ENCODE measurements at regions of chr10 and their contacts with region 1.

Region 1: GRCh38 chr10:132637477-132638129 is 100.0 kb downstream of the INPP5A start:
- DNase-seq: peak; percentile 59
- ATAC-seq: peak; percentile 88
- H3K4me3 ChIP-seq: no peak overlapping the region
- H3K27ac ChIP-seq: no peak overlapping the region
- H3K4me1 ChIP-seq: no peaks in the 10 kb centered on the region
- H3K27me3 ChIP-seq: no peaks in the 10 kb centered on the region; a peak in 1 of 5 replicates
- CTCF ChIP-seq: peak; percentile 80
- EP300 ChIP-seq: no peak
- POLR2A ChIP-seq: no peak
- RAD21 ChIP-seq: peak; percentile 74

Region 2: GRCh38 chr10:132387764-132388210 is 249.8 kb before region 1 on chr10:
- CTCF ChIA-PET with region 1: no interaction called
- POLR2A ChIA-PET with region 1: no interaction called
- in situ Hi-C with region 1: loop called (anchors 10 kb)
- intact Hi-C with region 1: no loop called
- DNase-seq: peak; percentile 29
- ATAC-seq: peak; percentile 22
- H3K4me3 ChIP-seq: peak overlapping the region in 1 of 3 experiments; percentile 48; a peak in 1 of 6 replicates
- H3K27ac ChIP-seq: no peak overlapping the region
- H3K4me1 ChIP-seq: peaks cover 61% of the 10 kb centered on the region
- H3K27me3 ChIP-seq: peaks cover 3 to 33% of the 10 kb centered on the region in 2 experiments; a peak in 2 of 5 replicates
- CTCF ChIP-seq: peak; percentile 89
- EP300 ChIP-seq: no peak
- POLR2A ChIP-seq: no peak
- RAD21 ChIP-seq: peak; percentile 69

Region 3: DNA sequence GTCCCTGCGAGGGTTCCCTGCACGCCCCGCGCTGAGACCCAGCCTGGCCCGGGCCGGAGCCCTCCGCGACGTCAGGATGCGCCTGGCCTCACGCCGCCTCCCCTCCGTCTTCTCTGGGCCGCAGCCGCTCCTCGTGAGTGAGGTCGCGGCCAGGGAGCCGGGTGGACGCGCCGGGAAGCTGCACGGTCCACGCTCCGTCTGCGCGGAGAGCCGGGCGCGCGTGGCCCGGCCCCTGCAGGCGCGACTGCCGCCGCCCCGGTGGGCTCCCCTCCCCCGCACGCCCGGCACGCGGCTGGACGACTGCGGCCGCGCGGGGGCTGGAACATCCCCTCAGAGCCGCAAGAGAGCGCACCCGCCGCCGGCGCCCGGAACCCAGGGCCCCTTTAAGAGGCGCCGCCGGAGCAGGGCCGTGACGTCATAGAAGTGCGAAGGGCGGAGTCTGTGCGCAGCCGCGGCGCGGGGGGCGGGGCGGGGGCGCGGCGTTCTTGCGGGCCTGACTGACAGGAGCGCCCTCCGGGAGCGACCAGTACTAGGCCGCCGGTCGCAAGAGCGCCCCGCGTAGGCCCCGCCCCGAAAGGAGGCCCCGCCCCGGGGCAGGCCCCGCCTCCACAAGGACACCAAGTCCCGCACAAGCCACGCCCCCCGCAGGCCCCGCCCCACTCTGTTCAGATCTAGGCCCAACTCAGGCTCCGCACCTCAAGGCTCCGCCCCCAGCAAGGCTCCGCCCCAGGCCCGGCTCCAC is 100.5 kb before region 1 on chr10:
- CTCF ChIA-PET with region 1: no interaction called
- POLR2A ChIA-PET with region 1: no interaction called
- in situ Hi-C with region 1: no loop called
- intact Hi-C with region 1: no loop called
- DNase-seq: peak; percentile 95
- ATAC-seq: peak; percentile 82
- H3K4me3 ChIP-seq: peak overlapping the region; percentile 79 to 85 (median 83); a peak in 5 of 6 replicates
- H3K27ac ChIP-seq: peak overlapping the region; percentile 67
- H3K4me1 ChIP-seq: peaks cover 49% of the 10 kb centered on the region
- H3K27me3 ChIP-seq: no peaks in the 10 kb centered on the region
- CTCF ChIP-seq: peak; percentile 50
- EP300 ChIP-seq: no peak
- POLR2A ChIP-seq: peak in 1 of 2 experiments; percentile 67; a peak in 2 of 4 replicates
- RAD21 ChIP-seq: peak; percentile 76; the same call in 1 of the 2 replicates

Region 4: DNA sequence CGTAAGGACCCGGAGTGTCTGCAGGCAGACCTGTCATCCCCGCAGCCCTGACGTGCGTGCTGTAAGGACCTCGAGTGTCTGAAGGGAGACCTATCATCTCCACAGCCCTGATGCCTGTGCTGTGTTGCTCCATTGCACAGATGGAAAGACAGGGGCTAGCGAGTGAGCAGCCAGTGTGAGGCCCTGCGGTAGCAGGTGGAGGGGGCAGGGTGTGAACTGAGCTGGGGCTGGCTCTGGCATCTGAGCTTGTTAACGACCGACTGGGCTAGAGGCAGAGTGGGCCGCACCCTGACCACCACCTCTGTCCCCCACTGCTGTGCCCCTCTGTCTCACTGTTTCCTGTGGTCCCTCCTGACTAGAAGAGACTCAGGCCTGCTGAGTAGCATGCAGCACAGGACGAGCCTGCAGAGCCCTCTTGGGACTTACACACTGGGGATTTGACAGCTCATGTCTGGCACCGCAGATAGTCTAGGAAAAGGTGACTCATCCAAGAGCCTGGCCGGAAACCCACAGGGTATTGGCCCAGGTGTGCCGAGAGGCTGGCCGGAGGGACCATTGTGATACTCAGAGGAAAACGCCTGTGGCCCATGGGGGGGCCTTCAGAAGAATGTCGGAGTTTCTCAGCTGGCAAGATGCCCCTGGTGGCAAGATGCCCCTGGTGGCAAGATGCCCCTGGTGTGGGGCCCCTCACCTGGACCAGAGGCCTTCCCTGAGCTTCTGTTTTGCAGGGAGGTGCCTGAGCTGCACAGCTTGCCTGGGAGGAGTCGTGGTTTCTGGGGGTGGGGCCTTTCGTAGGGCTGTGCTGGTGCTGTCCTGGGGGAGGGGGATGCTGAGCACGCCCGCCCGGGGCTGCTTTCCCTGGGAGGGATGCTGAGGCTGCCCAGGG is 65.7 kb before region 1 on chr10:
- CTCF ChIA-PET with region 1: no interaction called
- POLR2A ChIA-PET with region 1: no interaction called
- in situ Hi-C with region 1: no loop called
- intact Hi-C with region 1: loop called (anchors 5 kb)
- DNase-seq: peak; percentile 75
- ATAC-seq: peak; percentile 86
- H3K4me3 ChIP-seq: peak overlapping the region in 1 of 3 experiments; percentile 45; a peak in 1 of 6 replicates
- H3K27ac ChIP-seq: no peak overlapping the region
- H3K4me1 ChIP-seq: peaks cover 40% of the 10 kb centered on the region
- H3K27me3 ChIP-seq: no peaks in the 10 kb centered on the region
- CTCF ChIP-seq: no peak
- EP300 ChIP-seq: no peak
- POLR2A ChIP-seq: no peak
- RAD21 ChIP-seq: no peak

Region 5: DNA sequence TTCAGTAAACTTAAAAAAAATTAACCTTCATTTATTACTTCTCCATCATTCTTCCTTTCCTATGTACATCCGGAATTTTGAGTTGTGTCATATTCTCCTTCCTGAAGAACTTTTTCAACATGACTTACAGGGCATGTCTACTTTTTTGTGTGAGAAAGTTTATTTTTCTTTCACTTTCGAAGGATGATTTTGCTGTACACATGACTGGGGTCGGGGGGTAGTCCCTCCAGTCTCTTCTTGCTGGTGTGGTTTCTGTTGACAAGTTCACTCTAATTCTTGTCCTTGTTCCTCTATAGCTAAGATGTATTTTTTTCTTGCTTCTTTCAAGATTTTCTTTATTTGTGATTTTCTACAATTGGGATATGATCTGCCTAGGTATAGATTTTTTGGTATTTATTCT is 44.2 kb before region 1 on chr10:
- CTCF ChIA-PET with region 1: no interaction called
- POLR2A ChIA-PET with region 1: no interaction called
- in situ Hi-C with region 1: no loop called
- intact Hi-C with region 1: loop called (anchors 5 kb)
- DNase-seq: no peak
- ATAC-seq: no peak
- H3K4me3 ChIP-seq: no peak overlapping the region
- H3K27ac ChIP-seq: no peak overlapping the region
- H3K4me1 ChIP-seq: peaks cover 52% of the 10 kb centered on the region
- H3K27me3 ChIP-seq: no peaks in the 10 kb centered on the region; a peak in 1 of 5 replicates
- CTCF ChIP-seq: no peak
- EP300 ChIP-seq: no peak
- POLR2A ChIP-seq: no peak
- RAD21 ChIP-seq: no peak

Region 6: DNA sequence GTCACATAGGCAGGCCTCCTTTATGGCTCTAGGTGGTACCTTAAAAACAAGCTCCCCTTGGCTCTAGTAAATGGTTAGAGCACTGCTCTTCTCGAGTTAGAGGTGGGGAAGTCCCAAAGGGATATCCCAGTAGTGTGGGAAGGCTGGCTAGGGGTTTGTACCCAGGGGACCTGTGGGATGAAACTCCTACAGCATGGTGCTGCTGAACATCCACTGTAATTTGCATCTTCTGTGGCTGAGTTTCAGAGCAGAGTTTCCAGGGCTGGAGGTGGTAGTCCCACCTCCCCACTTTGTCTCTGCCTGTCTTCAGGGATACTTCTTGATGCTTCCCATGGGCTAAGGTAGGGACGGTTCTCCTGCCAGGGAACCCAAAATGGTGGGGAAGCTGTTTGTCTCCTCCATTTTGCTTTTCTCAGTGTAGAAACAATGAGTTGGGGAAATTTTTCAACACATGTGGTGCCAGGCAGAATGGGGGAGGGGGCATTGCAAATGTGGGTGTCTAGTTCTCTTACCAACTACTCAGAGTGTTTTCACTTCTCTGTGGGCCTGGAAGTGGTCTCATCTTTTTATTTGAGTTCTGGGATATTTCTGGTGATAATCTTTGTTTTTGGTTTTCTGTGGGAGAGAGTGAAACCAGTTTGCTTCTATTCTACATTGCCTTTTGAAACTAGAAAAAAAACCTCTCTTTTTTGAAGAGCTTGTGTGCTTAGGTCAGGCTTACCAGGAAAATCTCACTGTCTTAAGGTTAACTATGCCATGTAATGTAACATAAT is 852.4 kb after region 1 on chr10:
- CTCF ChIA-PET with region 1: no interaction called
- POLR2A ChIA-PET with region 1: no interaction called
- in situ Hi-C with region 1: no loop called
- intact Hi-C with region 1: no loop called
- DNase-seq: no peak
- ATAC-seq: no peak
- H3K4me3 ChIP-seq: no peak overlapping the region
- H3K27ac ChIP-seq: no peak overlapping the region
- H3K4me1 ChIP-seq: no peaks in the 10 kb centered on the region
- H3K27me3 ChIP-seq: no peaks in the 10 kb centered on the region
- CTCF ChIP-seq: no peak
- EP300 ChIP-seq: no peak
- POLR2A ChIP-seq: no peak
- RAD21 ChIP-seq: no peak

Measured in HepG2 (cell line).